ENCODE measurements at regions of chr12 and their contacts with region 1.

Region 1: GRCh38 chr12:121399391-121400331 is at the start of gene RNF34:
- DNase-seq: peak; percentile 98
- H3K4me3 Mint-ChIP-seq: peak within 1 kb of the TSS; percentile 92
- H3K27ac Mint-ChIP-seq: peak within 1 kb of the TSS; percentile 94
- H3K4me1 Mint-ChIP-seq: peaks cover 31% of the 10 kb centered on the region
- H3K27me3 Mint-ChIP-seq: no peaks in the 10 kb centered on the region
- total RNA-seq, gene RNF34: 80.6 and 83.7 TPM in 2 replicates

Region 2: DNA sequence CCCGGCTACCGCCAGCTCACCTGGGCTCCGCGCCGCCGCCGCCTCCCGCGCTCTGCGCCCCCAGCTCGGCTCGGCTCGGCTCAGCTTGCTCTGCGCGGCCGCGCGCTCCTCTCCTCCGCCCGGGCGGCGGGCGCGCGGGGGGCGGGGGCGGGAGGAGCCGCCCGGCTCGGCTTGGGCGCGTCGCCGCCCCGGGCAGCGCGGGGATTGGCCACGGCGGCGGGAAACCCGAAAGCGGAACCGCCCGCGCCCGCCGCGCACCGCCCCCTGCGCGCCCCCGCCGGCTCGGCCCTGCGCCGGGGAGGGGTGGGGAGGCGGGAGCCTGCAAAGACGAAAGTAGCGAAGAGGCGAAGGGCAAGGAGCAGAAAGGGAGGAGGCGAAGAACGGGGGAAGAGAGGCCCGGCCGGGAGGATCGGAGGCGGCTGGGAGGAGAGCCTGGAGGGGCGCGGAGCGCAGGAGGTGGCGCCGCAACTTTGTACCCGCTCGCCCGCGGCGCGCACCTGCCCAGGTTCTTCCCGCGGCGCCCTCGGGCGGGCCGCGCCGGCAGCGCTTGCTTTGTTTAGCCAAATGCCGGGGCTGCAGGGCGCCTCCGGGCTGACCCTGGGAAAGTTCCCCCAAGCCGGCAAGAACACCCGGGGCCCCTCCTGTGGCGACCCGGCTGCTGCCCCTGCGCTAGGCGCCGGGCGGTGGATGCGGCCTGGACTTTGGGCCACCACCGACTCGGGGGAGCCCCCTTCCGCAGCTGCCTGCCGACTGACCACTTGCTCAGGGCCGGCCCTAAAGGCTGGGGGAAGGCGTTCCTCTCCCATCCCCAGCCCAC is 102.8 kb before region 1 on chr12 and contains the start of gene CAMKK2:
- intact Hi-C with region 1: loop called (anchors 1 kb)
- DNase-seq: peak; percentile 91
- H3K4me3 Mint-ChIP-seq: peak within 1 kb of the TSS; percentile 94
- H3K27ac Mint-ChIP-seq: peak within 1 kb of the TSS; percentile 88
- H3K4me1 Mint-ChIP-seq: peaks cover 35% of the 10 kb centered on the region
- H3K27me3 Mint-ChIP-seq: no peaks in the 10 kb centered on the region
- total RNA-seq, gene CAMKK2: 38.1 and 41.0 TPM in 2 replicates

Region 3: GRCh38 chr12:121334513-121335343 is 64.9 kb before region 1 on chr12:
- intact Hi-C with region 1: loop called (anchors 1 kb)
- DNase-seq: no peak
- H3K4me3 Mint-ChIP-seq: no peak overlapping the region
- H3K27ac Mint-ChIP-seq: no peak overlapping the region
- H3K4me1 Mint-ChIP-seq: peaks cover 4% of the 10 kb centered on the region
- H3K27me3 Mint-ChIP-seq: no peaks in the 10 kb centered on the region

Region 4: GRCh38 chr12:121467115-121467793 is 67.6 kb after region 1 on chr12:
- intact Hi-C with region 1: loop called (anchors 1 kb)
- DNase-seq: peak; percentile 88
- H3K4me3 Mint-ChIP-seq: no peak overlapping the region
- H3K27ac Mint-ChIP-seq: no peak overlapping the region
- H3K4me1 Mint-ChIP-seq: peaks cover 29% of the 10 kb centered on the region
- H3K27me3 Mint-ChIP-seq: peaks cover 8% of the 10 kb centered on the region

Region 5: DNA sequence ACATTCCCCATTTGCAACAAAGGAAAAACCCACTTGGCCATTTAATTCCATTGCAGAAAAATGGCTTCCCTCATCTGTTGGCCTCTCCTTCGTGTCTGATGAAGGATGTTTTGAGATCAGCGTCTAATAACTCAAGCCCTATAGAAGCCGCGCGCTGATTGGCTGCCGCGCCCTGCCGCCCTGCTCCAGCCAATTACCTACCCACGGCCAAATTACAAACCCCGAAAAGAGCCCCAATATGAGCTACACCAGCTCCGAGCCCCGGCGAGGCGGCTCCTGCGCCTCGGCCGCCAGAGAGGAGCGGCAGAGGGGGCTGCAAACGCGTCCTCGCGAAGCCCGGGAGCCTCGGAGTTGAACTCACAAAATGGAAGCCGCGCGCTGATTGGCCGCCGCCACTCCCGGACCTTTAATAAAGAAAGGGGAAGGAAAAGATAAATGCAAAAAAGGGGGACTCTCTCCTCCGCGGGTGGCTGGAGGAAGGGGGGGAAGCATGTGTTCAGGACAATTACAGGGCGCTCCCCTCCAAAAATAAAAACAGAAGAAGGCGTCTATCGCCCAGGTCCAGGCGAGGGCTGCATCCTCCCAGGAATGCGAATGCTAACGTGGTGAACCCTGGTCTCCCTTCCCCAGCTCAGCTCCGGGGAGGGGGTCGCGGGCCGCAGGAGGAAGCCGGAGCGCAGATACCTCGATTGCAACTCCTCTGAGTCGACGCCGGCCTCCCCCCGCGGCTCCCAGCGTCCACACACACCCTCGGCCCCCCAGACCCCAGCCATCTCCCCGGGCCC is 403.4 kb after region 1 on chr12:
- intact Hi-C with region 1: loop called (anchors 10 kb)
- DNase-seq: peak; percentile 83
- H3K4me3 Mint-ChIP-seq: peak overlapping the region; percentile 87
- H3K27ac Mint-ChIP-seq: peak overlapping the region; percentile 97
- H3K4me1 Mint-ChIP-seq: peaks cover 40% of the 10 kb centered on the region
- H3K27me3 Mint-ChIP-seq: peaks cover 2% of the 10 kb centered on the region

Region 6: DNA sequence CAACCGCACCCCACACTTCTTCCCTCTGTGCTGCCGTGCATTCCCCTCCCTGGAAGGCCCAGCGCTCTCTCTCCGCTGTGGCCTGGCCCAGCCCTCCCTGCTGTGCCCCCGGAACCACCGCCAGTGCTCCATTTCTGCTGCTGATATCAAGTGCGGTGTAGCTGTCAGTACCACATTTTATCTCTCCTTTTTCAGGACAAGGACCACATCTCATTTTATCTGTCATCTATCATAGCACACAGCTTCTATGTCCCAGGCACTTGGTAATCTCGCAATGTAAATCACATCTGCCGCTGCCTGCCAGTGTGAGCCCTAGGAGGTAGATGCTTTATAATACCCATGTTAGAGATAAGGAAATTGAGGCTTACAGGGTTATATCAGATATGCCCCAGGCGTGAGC is 756.0 kb after region 1 on chr12:
- intact Hi-C with region 1: no loop called
- DNase-seq: no peak
- H3K4me3 Mint-ChIP-seq: no peak overlapping the region
- H3K27ac Mint-ChIP-seq: no peak overlapping the region
- H3K4me1 Mint-ChIP-seq: no peaks in the 10 kb centered on the region
- H3K27me3 Mint-ChIP-seq: peaks cover 4% of the 10 kb centered on the region

Measured in activated T-helper 1 cell treated with anti-CD3 and anti-CD28 coated beads, Interleukin-12 subunit alpha, Interleukin-12 subunit beta, Interleukin-2, Interleukin-4 antibody, amounts not matched to agents 30 ng/mL and 10 ng/mL and 1 ng/mL, durations not matched to agents 14 hours and 24 hours and 36 hours (primary cell).